ENCODE measurements at regions of chr16 and their contacts with region 1.

Region 1: DNA sequence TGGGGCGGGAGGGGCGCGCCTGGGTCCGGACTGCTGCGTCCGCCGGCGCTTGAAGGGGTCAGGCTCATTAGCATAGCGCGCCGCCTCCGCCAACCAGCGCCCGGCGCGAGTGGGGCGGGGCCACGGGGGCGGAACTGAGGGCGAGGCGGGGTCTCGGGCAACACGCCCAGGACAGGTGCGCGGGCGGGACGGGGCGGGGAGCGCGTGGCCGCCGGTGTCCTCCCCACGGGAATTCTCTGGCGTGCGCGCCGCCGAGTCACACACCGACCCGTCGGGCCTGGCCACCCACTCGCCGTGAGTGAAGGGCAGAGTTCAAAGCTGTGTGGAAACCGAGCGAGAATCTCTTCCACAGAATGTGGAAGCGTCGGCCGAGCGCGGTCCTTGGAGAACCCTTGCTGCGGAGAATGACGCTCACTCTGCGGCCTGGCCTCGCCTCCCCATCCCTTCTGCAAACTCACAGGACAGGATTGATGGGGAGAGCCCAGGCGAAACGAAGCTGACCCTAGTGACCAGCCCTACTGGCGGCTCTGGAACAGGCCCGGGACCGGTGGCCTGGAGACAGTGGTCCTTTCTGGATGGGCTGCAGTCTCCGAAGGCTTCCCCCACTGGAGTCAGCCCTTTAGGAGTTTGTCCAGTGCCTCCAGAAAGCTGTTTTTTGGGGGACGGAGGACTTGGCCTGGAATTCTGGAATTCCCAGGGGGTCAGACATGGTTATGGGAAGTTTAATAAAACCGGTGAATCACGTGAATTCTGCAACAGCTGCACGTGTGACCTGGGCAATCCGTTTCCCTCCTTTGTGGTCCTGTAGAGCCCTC is at the start of gene SNAI3:
- DNase-seq: peak; percentile 78
- H3K4me3 Mint-ChIP-seq: peak within 1 kb of the TSS; percentile 65
- H3K27ac Mint-ChIP-seq: no peak within 1 kb of the TSS
- H3K4me1 Mint-ChIP-seq: no peaks in the 10 kb centered on the region
- H3K27me3 Mint-ChIP-seq: peaks cover 36% of the 10 kb centered on the region
- CTCF ChIP-seq: no peak
- total RNA-seq, gene SNAI3: not detected in 2 replicates

Region 2: DNA sequence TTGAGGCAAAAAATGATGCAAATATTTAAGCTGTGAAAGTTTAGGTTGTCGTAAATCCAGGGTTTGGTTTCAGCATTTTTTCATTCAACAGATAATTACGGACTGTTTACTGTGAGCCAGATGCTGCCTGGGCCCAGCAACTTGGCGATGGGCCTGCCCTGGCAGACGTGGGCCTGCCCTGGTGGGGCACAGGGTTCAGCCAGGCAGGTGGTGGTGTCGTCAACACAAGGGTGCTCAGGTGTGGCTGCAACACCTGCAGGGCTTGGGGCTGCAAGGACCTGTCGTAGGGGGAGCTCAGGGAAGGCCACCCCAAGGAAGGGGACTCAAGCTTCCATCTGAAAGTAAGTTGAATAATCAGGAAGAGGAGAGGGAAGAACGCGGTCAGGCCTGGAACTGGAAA is 101.4 kb before region 1 on chr16:
- CTCF ChIA-PET with region 1: no interaction called
- POLR2A ChIA-PET with region 1: no interaction called
- intact Hi-C with region 1: no loop called
- DNase-seq: no peak
- H3K4me3 Mint-ChIP-seq: no peak overlapping the region
- H3K27ac Mint-ChIP-seq: peak overlapping the region; percentile 35
- H3K4me1 Mint-ChIP-seq: peaks cover 6% of the 10 kb centered on the region
- H3K27me3 Mint-ChIP-seq: no peaks in the 10 kb centered on the region
- CTCF ChIP-seq: no peak

Region 3: DNA sequence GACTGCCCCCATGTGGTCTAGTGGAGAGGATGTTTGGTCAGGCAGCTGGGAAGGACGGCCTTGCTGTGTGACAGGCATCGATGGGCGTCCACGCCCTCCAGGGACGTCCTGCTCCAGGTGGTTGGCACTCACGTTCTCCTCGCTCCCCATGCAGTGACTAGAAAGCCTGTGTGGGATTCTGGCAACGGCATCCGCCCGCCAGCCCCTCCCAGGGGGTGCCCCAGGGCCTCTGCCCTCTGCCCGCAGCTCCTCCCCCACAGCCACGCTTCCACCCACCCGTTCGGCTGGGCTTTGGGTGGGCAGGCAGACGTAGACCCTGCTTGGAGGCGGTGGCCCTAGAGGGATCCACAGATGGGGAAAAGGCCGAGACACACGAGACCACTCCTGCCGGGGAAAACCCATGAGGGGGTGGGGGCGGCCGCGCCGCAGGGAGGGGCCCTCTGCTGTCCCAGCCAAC is 52.9 kb before region 1 on chr16:
- CTCF ChIA-PET with region 1: no interaction called
- POLR2A ChIA-PET with region 1: no interaction called
- intact Hi-C with region 1: no loop called
- DNase-seq: peak; percentile 35
- H3K4me3 Mint-ChIP-seq: no peak overlapping the region
- H3K27ac Mint-ChIP-seq: no peak overlapping the region
- H3K4me1 Mint-ChIP-seq: peaks cover 16% of the 10 kb centered on the region
- H3K27me3 Mint-ChIP-seq: no peaks in the 10 kb centered on the region
- CTCF ChIP-seq: no peak

Region 4: DNA sequence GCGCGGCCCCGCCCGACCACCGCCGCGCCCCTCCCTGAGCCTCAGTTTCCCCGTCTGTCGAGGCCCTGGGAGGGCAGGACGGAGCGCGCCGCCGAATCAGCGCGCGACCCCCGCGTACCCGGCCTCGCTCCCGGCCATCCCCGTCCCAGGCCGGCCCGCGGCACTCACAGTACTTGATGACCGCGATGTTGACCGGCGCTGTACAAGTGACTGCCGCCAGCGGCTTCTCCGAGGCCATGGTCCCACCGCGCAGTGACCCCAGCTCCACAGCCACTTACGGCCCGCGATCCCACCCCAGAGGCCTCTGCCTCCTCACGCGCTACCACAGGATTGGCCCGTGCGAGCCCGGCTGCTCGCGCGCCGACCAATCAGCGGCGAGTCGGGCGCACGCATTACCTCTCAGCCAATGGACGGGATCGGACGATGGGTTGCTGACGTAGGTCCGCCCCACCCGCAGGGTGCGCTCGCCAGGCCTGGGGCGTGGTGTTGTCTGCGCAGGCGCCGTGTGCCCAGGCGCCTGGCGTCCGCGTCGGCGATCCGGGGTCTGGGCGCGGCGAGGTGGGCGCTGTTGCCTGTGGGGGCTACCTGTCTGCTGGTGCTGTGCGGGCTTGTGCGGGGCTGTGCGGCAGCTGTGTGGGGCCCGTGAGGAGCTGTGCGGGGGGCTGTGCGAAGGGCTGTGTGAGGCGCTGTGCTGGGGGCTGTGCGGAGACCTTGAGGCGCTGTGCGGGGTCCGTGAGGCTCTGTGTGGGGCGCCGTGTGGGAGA is 23.6 kb before region 1 on chr16 and contains the start of gene MVD:
- CTCF ChIA-PET with region 1: no interaction called
- POLR2A ChIA-PET with region 1: interaction called, 10 read pairs
- intact Hi-C with region 1: no loop called
- DNase-seq: peak; percentile 97
- H3K4me3 Mint-ChIP-seq: peak within 1 kb of the TSS; percentile 96
- H3K27ac Mint-ChIP-seq: peak within 1 kb of the TSS; percentile 97
- H3K4me1 Mint-ChIP-seq: no peaks in the 10 kb centered on the region
- H3K27me3 Mint-ChIP-seq: no peaks in the 10 kb centered on the region
- CTCF ChIP-seq: no peak
- total RNA-seq, gene MVD: 30.3 and 32.4 TPM in 2 replicates